Ascending aorta (tissue), 2 donors: ENCODE measurements at regions of chr1 and their contacts with region 1.

Region 1: DNA sequence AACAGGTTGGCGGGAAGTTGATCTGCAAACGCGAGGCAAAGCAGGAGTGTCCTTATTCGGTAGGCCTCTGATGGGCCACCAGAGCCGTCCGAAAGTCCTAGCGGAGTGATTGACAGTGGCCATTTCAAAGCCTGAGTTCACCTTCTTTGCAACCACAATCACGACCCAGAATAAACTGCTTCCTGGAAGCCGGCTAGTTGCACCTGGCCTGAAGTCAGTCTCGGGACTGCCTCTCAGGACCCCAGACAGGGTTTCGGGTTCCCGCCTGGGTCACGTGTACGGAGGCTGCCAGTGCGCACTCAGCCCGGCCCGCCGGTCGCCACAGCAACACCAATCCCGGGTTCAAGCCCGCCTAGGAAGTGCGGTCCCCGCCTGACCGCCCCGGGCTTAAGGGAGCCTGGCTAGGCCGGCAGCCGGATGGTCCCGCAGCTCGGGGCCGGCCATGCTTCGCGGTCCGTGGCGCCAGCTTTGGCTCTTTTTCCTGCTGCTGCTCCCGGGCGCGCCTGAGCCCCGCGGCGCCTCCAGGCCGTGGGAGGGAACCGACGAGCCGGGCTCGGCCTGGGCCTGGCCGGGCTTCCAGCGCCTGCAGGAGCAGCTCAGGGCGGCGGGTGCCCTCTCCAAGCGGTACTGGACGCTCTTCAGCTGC is at the start of gene TOR3A:
- DNase-seq: peak; percentile 76 to 95
- H3K4me3 ChIP-seq: peak within 1 kb of the TSS; percentile 74 to 84
- H3K27ac ChIP-seq: peak within 1 kb of the TSS; percentile 83 to 85
- H3K4me1 ChIP-seq: peaks cover 0 to 11% of the 10 kb centered on the region in 2 donors
- H3K27me3 ChIP-seq: no peaks in the 10 kb centered on the region
- CTCF ChIP-seq: peak in 1 of 3 experiments; percentile 2
- total RNA-seq, gene TOR3A: 109 TPM

Region 2: GRCh38 chr1:179025125-179025974 is 56.5 kb before region 1 on chr1 and contains the start of gene FAM20B:
- intact Hi-C with region 1: loop called (anchors 5 kb)
- DNase-seq: peak; percentile 68 to 96
- H3K4me3 ChIP-seq: peak within 1 kb of the TSS; percentile 91 to 97
- H3K27ac ChIP-seq: peak within 1 kb of the TSS; percentile 95 to 97
- H3K4me1 ChIP-seq: peaks cover 0 to 3% of the 10 kb centered on the region in 2 donors
- H3K27me3 ChIP-seq: no peaks in the 10 kb centered on the region
- CTCF ChIP-seq: no peak
- total RNA-seq, gene FAM20B: 17.3 TPM

Region 3: GRCh38 chr1:179190861-179191260 is 109.1 kb after region 1 on chr1:
- intact Hi-C with region 1: loop called (anchors 1 kb)
- DNase-seq: no peak
- H3K4me3 ChIP-seq: no peak overlapping the region
- H3K27ac ChIP-seq: peak overlapping the region in 1 of 2 donors; percentile 4
- H3K4me1 ChIP-seq: no peaks in the 10 kb centered on the region
- H3K27me3 ChIP-seq: no peaks in the 10 kb centered on the region
- CTCF ChIP-seq: no peak

Region 4: DNA sequence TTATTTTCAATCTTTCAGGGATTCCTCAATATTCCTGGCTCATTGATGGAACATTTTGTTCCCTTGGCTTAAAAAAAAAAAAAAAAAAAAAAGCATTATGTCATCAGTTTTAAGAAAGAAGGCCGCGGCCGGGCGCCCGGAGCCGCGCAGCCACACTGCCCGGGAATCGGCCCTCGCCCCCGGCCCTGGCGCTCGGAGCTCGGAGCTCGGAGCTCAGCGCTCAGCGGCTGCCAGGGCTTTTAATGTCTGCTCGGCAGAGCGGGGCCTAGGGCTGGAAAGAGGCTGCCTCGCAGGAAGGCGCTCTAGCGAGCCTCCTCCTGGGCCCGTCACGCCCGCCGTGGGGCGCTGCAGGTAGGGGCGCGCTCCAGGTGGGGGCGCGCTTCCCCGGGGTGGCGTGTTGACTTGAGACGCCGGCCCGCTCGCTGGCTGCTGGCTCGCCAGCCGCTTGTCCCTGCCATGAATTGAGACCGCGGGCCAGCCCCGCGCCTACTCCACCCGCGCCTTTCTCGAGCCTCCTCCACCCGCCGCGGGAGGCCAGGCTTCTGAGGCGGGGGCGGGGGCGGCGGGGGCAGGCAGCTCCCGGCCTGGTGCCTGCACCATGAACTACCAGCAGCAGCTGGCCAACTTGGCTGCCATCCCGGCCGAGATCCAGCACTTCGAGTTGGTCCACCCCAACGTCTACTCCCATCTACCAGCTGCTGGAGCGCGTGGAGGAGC is 504.5 kb after region 1 on chr1:
- intact Hi-C with region 1: loop called (anchors 10 kb)
- DNase-seq: no peak
- H3K4me3 ChIP-seq: peak overlapping the region; percentile 54 to 67
- H3K27ac ChIP-seq: peak overlapping the region; percentile 69 to 91
- H3K4me1 ChIP-seq: no peaks in the 10 kb centered on the region
- H3K27me3 ChIP-seq: no peaks in the 10 kb centered on the region
- CTCF ChIP-seq: peak; percentile 20 to 73 (median 45)

Region 5: GRCh38 chr1:179882243-179883039 is 800.6 kb after region 1 on chr1 and contains the start of gene TOR1AIP1:
- intact Hi-C with region 1: loop called (anchors 10 kb)
- DNase-seq: peak; percentile 85 to 98
- H3K4me3 ChIP-seq: peak within 1 kb of the TSS; percentile 83 to 93
- H3K27ac ChIP-seq: peak within 1 kb of the TSS; percentile 97 to 100
- H3K4me1 ChIP-seq: peaks cover 4 to 21% of the 10 kb centered on the region in 2 donors
- H3K27me3 ChIP-seq: no peaks in the 10 kb centered on the region
- CTCF ChIP-seq: peak; percentile 24 to 64 (median 43)
- total RNA-seq, gene TOR1AIP1: 46.6 TPM